MCF 10A (cell line): ENCODE measurements at regions of chr4 and their contacts with region 1.

Region 1: DNA sequence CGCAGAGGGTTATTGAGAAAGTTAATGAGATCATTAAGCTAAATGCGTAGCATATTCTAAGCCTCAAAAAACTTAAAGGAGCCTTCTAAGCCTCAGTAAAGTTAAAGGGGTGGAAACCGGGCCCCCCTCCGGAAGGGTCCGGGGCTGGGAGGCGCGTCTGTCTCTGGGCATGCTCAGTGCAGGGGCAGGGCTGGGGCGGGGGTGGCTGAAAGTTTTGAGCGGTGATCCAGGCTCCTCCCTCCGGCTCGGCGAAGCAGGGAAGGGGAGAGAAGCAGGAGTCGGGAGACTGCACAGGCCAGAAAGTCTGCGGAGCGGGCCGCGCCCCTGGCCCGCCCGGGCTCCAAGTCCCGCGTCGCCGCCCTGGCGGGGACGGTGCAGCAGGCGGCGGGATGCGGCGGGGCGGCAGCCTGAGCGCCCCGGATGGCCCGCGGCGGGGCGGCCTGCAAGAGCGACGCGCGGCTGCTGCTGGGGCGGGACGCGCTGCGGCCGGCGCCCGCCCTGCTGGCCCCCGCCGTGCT is at the start of gene EVC:
- DNase-seq: peak; percentile 78
- H3K4me3 Mint-ChIP-seq: peak within 1 kb of the TSS; percentile 74
- H3K27ac Mint-ChIP-seq: peak within 1 kb of the TSS; percentile 79
- H3K4me1 Mint-ChIP-seq: peaks cover 36% of the 10 kb centered on the region
- H3K27me3 Mint-ChIP-seq: no peaks in the 10 kb centered on the region
- CTCF ChIP-seq: no peak
- total RNA-seq, gene EVC: 29.0 and 29.3 TPM in 2 replicates

Region 2: DNA sequence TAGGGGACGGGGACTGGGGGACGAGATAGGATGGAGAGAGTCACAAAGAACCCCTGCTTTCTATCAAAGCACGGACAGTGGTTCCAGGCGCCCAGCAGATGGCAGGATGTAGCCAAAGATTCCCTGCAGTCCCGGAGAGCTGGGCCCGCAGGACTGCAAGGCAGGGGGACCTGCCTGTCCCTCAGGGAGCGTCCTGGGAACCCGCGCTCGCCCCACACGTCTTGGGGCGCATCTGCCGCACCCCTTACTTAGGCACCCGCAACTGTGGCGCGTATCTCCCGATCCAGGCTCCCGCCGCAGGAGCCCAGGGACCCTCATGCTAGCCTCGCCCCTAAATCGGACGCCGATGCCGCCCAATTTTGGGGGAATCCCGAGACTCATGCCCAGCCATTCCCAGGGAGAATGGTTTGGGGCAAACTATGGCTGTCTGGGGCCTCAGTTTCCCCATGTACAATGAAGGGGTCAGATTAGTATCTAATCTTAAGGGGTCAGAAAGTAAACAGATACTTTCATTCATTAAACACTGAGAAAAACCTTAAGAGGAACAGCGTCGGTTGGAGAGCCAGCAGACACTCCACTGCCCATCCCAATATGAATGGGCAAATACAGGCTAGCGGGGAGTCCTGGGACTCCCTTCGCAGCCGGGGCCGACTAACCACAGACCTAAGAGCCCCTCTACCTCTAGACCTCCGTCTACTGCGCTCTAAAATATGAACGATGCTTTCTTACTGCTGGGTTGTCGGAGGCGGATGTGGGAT is 660.3 kb before region 1 on chr4:
- CTCF ChIA-PET with region 1: no interaction called
- POLR2A ChIA-PET with region 1: no interaction called
- intact Hi-C with region 1: loop called (anchors 10 kb)
- DNase-seq: peak; percentile 68
- H3K4me3 Mint-ChIP-seq: peak overlapping the region; percentile 68
- H3K27ac Mint-ChIP-seq: no peak overlapping the region
- H3K4me1 Mint-ChIP-seq: no peaks in the 10 kb centered on the region
- H3K27me3 Mint-ChIP-seq: no peaks in the 10 kb centered on the region
- CTCF ChIP-seq: peak; percentile 72

Region 3: DNA sequence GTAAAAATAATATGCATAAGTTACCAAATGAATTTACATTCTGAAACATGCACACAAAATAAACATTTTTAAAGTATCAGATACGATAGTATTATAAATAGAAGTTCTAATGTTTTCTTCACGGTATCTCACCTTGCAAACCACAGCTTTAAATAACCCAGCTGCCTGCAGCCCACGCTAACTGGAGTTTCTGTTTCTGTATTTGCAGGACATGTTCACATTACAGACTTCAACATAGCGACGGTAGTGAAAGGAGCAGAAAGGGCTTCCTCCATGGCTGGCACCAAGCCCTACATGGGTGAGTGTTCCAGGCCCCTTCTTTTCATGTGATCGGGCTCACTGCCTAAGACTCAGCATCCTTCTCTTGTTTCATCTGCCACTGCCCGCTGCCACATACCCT is 294.4 kb before region 1 on chr4:
- CTCF ChIA-PET with region 1: no interaction called
- POLR2A ChIA-PET with region 1: no interaction called
- intact Hi-C with region 1: no loop called
- DNase-seq: no peak
- H3K4me3 Mint-ChIP-seq: no peak overlapping the region
- H3K27ac Mint-ChIP-seq: no peak overlapping the region
- H3K4me1 Mint-ChIP-seq: no peaks in the 10 kb centered on the region
- H3K27me3 Mint-ChIP-seq: peaks cover 10% of the 10 kb centered on the region
- CTCF ChIP-seq: no peak

Region 4: DNA sequence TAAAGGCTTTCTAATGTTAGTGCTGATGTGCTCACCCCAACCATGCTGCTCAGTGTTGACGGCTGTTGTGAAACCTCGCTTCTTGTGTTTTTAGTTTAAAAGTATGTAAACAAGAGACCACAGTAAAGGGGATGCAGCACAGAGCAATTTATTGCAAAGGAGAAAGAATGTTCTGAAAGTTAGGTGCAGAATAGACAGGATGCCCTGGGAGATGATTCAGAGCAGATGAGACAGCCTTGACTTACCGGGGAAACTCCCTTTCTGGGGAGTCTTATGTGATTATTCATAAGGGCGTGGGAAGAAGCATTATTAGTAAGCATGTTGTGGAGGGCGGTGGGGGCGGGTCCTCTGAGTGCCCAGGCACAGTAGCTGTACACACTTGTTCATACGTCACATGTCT is 47.7 kb after region 1 on chr4:
- CTCF ChIA-PET with region 1: no interaction called
- POLR2A ChIA-PET with region 1: interaction called, 3 read pairs
- intact Hi-C with region 1: loop called (anchors 1 kb)
- DNase-seq: peak; percentile 94
- H3K4me3 Mint-ChIP-seq: no peak overlapping the region
- H3K27ac Mint-ChIP-seq: peak overlapping the region; percentile 86
- H3K4me1 Mint-ChIP-seq: peaks cover 27% of the 10 kb centered on the region
- H3K27me3 Mint-ChIP-seq: no peaks in the 10 kb centered on the region
- CTCF ChIP-seq: no peak

Region 5: DNA sequence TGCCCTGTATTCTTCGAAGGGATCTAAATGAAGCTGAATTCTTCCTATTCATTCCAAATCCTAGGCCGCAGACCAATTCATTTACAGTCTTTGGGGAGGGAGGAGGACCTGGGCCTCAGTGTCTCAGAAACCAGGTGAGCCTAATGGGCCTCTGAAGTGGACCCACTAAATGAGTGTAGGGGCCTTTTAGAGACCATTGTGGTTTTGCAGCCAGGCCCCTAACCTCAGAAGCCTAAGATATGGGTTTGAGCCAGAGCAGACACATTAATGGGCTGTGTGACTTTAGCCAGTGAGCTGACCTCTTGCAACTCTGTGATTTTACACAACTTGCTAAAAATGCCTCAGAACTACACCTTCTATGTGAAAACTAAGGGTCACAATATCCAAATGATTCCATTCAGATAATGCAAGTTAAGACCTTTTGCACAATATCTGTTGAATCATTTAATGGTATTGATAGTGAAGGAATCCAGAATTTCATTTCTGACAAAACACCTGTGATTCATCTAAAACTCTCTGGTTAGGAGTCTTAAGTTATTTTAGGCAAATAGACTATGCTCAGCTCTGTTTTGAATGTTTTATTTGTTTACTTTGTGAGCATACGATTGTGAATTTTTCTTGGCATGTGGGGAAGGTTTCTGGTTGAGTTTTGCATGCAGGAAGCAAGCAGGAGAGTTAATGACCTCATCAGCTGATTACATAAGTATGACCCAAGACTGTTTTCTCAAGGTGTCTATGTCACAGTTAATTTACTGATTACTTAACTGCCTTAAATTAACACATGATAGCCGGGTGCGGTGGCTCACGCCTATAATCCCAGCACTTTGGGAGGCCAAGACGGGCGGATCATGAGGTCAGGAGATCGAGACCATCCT is 75.0 kb after region 1 on chr4:
- CTCF ChIA-PET with region 1: interaction called, 5 read pairs
- POLR2A ChIA-PET with region 1: interaction called, 4 read pairs
- intact Hi-C with region 1: loop called (anchors 1 kb)
- DNase-seq: peak; percentile 69
- H3K4me3 Mint-ChIP-seq: no peak overlapping the region
- H3K27ac Mint-ChIP-seq: peak overlapping the region; percentile 58
- H3K4me1 Mint-ChIP-seq: peaks cover 9% of the 10 kb centered on the region
- H3K27me3 Mint-ChIP-seq: no peaks in the 10 kb centered on the region
- CTCF ChIP-seq: no peak